K562 (cell line): ENCODE measurements at regions of chr1 and their contacts with region 1.

Region 1: GRCh38 chr1:27284425-27285273 is 37.3 kb upstream of the TMEM222 start:
- DNase-seq: peak; percentile 87 to 91 (median 90)
- ATAC-seq: peak; percentile 100
- H3K4me3 ChIP-seq: no peak overlapping the region
- H3K27ac ChIP-seq: no peak overlapping the region
- H3K4me1 ChIP-seq: 0 out of 5 replicates have a peak, but pooled peaks cover 0 to 2% of the 10 kb centered on the region in 2 experiments
- H3K27me3 ChIP-seq: no peaks in the 10 kb centered on the region
- CTCF ChIP-seq: peak; percentile 88 to 94 (median 89)
- EP300 ChIP-seq: no peak
- POLR2A ChIP-seq: no peak
- RAD21 ChIP-seq: peak; percentile 82 to 94

Region 2: GRCh38 chr1:27102707-27103491 is 181.8 kb before region 1 on chr1:
- CTCF ChIA-PET with region 1: interaction called, 57 read pairs
- POLR2A ChIA-PET with region 1: interaction called, 3 read pairs
- in situ Hi-C with region 1: loop called (anchors 5 kb)
- intact Hi-C with region 1: loop called (anchors 1 kb)
- DNase-seq: peak; percentile 85 to 90 (median 88)
- ATAC-seq: peak; percentile 89
- H3K4me3 ChIP-seq: no peak overlapping the region
- H3K27ac ChIP-seq: no peak overlapping the region
- H3K4me1 ChIP-seq: peaks cover 18 to 57% of the 10 kb centered on the region in 2 experiments
- H3K27me3 ChIP-seq: no peaks in the 10 kb centered on the region; a peak in 1 of 5 replicates
- CTCF ChIP-seq: peak; percentile 97 to 99 (median 97)
- EP300 ChIP-seq: no peak
- POLR2A ChIP-seq: no peak
- RAD21 ChIP-seq: peak; percentile 95 to 98

Region 3: DNA sequence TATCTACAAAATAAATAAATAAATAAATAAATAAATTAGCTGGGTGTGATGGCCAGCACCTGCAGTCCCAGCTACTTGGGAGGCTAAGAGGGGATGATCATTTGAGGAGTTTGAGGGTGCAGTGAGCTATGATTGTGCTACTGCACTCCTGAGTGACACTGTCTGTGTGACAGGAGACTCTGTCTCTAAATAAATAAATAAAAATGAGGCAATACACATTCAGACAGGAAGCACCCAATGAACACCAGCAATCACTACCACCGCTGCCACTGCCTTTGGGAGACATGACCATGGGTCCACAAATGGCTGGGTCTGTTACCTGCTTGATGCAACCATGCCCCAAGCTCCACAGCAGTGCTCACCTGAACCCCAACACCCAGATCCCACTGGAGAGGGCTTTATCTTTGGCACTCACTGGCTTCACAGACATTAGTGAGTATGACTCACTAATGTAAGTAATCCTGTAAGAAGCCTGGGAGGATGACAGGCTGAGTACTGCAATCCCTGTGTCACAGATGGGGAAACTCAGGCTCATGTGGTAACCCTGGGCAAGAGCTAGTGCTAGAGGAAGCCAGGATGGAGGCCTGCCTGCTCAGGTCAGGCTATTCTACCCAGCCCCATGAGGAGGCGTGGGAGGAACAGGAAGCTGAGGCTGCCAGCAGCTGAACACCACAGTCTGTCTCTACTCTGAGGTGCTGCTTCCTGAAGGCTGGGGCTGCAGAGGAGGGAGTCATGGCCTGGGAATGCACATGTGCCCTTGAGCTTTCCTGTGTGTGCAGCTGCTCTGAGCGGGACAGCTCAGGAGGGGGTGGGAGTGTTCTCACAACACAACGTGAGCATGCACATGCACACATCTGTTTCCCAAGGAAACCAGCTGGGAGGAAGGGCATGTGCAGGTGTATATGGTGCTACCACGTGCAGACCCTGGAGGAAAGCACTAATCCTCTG is 172.7 kb before region 1 on chr1:
- CTCF ChIA-PET with region 1: interaction called, 14 read pairs
- POLR2A ChIA-PET with region 1: no interaction called
- in situ Hi-C with region 1: no loop called
- intact Hi-C with region 1: no loop called
- DNase-seq: peak; percentile 52 to 78 (median 60)
- ATAC-seq: peak; percentile 75
- H3K4me3 ChIP-seq: no peak overlapping the region
- H3K27ac ChIP-seq: peak overlapping the region; percentile 8; the same call in 1 of the 3 replicates
- H3K4me1 ChIP-seq: peaks cover 34 to 53% of the 10 kb centered on the region in 2 experiments
- H3K27me3 ChIP-seq: no peaks in the 10 kb centered on the region
- CTCF ChIP-seq: peak; percentile 39 to 71 (median 40); a peak in 3 of 6 replicates
- EP300 ChIP-seq: peak; percentile 49; the same call in 1 of the 2 replicates
- POLR2A ChIP-seq: no peak
- RAD21 ChIP-seq: peak; percentile 77 to 83

Region 4: DNA sequence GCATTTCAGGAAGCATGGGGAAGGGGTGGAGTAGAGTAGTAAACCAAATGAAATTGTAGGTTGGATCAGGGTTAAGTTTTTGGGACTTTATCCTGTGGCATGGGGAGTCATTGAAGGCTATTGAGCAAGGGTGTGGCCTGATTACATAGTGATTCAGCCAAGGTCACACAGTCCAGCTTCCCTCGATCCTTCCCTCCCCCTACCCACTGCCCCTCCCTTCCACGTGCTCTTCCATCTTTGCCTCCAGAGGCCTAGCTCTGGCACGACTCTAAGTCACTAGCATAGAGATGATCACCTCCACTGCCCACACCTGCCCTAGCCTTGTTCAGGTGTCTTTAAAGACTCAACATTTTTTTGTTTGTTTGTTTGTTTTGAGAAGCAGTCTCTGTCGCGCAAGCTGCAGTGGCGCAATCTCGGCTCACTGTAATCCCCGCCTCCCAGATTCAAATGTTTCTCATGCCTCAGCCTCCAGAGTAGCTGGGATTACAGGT is 92.6 kb before region 1 on chr1:
- CTCF ChIA-PET with region 1: interaction called, 30 read pairs
- POLR2A ChIA-PET with region 1: no interaction called
- in situ Hi-C with region 1: loop called (anchors 5 kb)
- intact Hi-C with region 1: no loop called
- DNase-seq: peak in 3 of 4 experiments; percentile 20 to 56 (median 49)
- ATAC-seq: peak; percentile 59
- H3K4me3 ChIP-seq: no peak overlapping the region
- H3K27ac ChIP-seq: no peak overlapping the region
- H3K4me1 ChIP-seq: peaks cover 7 to 22% of the 10 kb centered on the region in 2 experiments
- H3K27me3 ChIP-seq: no peaks in the 10 kb centered on the region; a peak in 1 of 5 replicates
- CTCF ChIP-seq: no peak
- EP300 ChIP-seq: no peak
- POLR2A ChIP-seq: no peak
- RAD21 ChIP-seq: no peak

Region 5: DNA sequence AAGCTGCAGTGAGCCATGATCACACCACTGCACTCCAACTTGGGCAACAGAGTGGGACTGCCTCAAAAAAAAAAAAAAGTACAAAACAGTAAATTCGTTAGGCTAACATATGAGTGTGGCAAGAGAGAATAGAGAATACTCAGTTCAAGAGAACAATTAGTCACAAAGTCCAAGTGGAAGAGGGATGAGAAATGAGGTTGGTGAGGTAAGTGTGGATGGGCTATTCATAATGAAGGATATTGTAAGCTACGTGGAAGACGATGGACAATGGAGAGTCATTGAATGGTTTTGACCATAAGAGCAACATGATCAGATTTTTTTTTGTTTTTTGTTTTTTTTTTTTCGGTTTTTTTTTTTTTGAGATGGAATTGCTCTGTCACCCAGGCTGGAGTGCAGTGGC is 15.4 kb before region 1 on chr1:
- CTCF ChIA-PET with region 1: no interaction called
- POLR2A ChIA-PET with region 1: no interaction called
- in situ Hi-C with region 1: no loop called
- intact Hi-C with region 1: no loop called
- DNase-seq: no peak
- ATAC-seq: no peak
- H3K4me3 ChIP-seq: no peak overlapping the region
- H3K27ac ChIP-seq: no peak overlapping the region
- H3K4me1 ChIP-seq: no peaks in the 10 kb centered on the region
- H3K27me3 ChIP-seq: no peaks in the 10 kb centered on the region
- CTCF ChIP-seq: no peak
- EP300 ChIP-seq: no peak
- POLR2A ChIP-seq: no peak
- RAD21 ChIP-seq: no peak

Region 6: GRCh38 chr1:27589841-27590426 is 305.3 kb after region 1 on chr1:
- CTCF ChIA-PET with region 1: no interaction called
- POLR2A ChIA-PET with region 1: no interaction called
- in situ Hi-C with region 1: no loop called
- intact Hi-C with region 1: no loop called
- DNase-seq: no peak
- ATAC-seq: no peak
- H3K4me3 ChIP-seq: no peak overlapping the region
- H3K27ac ChIP-seq: no peak overlapping the region
- H3K4me1 ChIP-seq: peaks cover under 1 to 47% of the 10 kb centered on the region in 2 experiments; a peak in 3 of 5 replicates
- H3K27me3 ChIP-seq: no peaks in the 10 kb centered on the region
- CTCF ChIP-seq: no peak
- EP300 ChIP-seq: no peak
- POLR2A ChIP-seq: no peak
- RAD21 ChIP-seq: no peak